Activated CD4-positive, alpha-beta T cell treated with anti-CD3 and anti-CD28 coated beads for 36 hours (primary cell): ENCODE measurements at regions of chr6 and their contacts with region 1.

Region 1: DNA sequence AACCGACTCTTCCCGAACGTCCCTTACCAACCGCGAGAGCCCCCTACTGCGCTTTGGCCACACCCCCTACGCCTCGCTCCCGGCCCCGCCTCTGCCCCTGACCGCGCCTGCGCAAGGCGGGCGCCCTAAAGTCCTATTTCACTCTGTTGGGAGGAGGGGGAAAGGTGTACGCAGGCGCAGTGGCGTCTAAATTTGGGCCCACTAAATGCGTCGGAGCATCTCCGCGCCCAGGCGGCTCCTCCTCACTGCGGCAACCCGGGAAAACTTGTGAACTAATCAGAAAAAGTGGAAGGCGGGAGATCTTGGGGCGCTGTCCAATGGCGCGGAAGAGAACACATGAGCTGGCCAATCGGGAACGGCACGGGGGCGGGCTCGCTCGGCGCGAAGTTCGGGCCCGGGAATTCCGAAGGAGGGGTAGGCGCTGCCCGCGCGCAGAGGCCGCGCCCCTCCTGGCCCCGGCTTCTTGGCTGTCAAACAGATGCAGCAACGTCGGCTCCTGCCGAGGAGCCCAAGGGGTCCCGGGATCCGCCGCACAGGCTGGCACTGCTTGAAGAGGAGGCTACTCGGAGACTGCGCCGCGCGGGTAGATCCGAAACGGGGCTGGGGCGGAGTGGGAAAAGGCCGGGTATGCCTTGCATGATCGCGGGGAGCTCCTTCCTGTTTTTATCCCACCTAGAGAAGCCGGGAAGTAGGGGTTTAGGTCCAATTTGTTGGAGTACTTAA is at the start of gene TCF19:
- DNase-seq: peak; percentile 99
- ATAC-seq: peak; percentile 90
- H3K4me3 Mint-ChIP-seq: peak within 1 kb of the TSS; percentile 97
- H3K27ac Mint-ChIP-seq: peak within 1 kb of the TSS; percentile 89
- H3K4me1 Mint-ChIP-seq: peaks cover 39% of the 10 kb centered on the region
- H3K27me3 Mint-ChIP-seq: no peaks in the 10 kb centered on the region
- total RNA-seq, gene TCF19: 82.6 to 88.0 TPM

Region 2: DNA sequence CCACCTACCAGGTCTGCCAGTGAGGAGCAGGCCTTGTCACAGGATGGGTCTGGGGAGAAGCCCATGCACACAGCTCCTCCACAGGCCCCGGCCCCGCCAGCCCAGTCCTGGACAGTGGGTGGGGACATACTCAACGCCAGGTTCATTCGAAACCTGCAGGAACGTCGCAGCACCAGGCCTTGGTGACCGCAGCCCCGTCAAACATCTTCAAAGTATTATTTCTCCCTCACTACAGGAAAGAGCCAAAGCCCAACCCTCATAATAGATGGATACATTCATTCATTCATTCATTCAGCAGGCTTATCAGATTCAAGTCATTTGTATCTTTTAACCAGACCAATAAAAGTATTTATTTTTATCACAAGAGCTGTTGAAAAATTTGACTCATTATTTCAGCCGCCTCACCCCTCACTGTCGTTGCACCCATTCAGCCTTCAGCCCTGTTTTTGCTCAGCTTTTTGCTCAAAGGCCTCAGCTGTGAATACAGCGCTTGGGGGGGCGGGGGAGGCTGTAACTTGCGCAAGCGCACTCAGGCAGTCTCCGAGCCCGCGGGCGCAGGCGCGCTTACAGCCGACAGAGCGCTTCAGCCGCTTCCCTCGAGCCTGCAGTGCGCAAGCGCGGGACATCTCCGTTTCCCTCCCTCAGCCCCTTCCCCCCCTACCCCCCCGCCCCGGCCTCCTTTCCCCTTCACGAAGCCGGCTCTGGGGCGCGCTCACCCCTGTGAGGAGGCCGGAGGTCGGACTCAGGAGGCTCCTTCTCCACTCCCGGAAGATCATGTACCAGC is 511.7 kb before region 1 on chr6 and contains the start of gene C6orf136:
- CTCF ChIA-PET with region 1: interaction called, 3 read pairs
- POLR2A ChIA-PET with region 1: no interaction called
- intact Hi-C with region 1: loop called in 1 of 2 experiments (anchors 1 kb)
- DNase-seq: peak; percentile 97
- ATAC-seq: peak; percentile 86
- H3K4me3 Mint-ChIP-seq: peak within 1 kb of the TSS; percentile 78
- H3K27ac Mint-ChIP-seq: peak within 1 kb of the TSS; percentile 88
- H3K4me1 Mint-ChIP-seq: peaks cover 20% of the 10 kb centered on the region
- H3K27me3 Mint-ChIP-seq: no peaks in the 10 kb centered on the region
- total RNA-seq, gene C6orf136: 26.5 to 30.8 TPM

Region 3: GRCh38 chr6:31139599-31139998 is 18.7 kb before region 1 on chr6:
- CTCF ChIA-PET with region 1: interaction called, 3 read pairs
- POLR2A ChIA-PET with region 1: no interaction called
- intact Hi-C with region 1: loop called in 1 of 2 experiments (anchors 1 kb)
- DNase-seq: no peak
- ATAC-seq: no peak
- H3K4me3 Mint-ChIP-seq: no peak overlapping the region
- H3K27ac Mint-ChIP-seq: no peak overlapping the region
- H3K4me1 Mint-ChIP-seq: peaks cover 6% of the 10 kb centered on the region
- H3K27me3 Mint-ChIP-seq: no peaks in the 10 kb centered on the region

Region 4: GRCh38 chr6:31197559-31198305 is 39.4 kb after region 1 on chr6:
- CTCF ChIA-PET with region 1: interaction called, 5 read pairs
- POLR2A ChIA-PET with region 1: interaction called, 4 read pairs
- intact Hi-C with region 1: loop called (anchors 1 to 2 kb)
- DNase-seq: peak; percentile 97
- ATAC-seq: peak; percentile 69
- H3K4me3 Mint-ChIP-seq: peak overlapping the region; percentile 76
- H3K27ac Mint-ChIP-seq: peak overlapping the region; percentile 80
- H3K4me1 Mint-ChIP-seq: peaks cover 50% of the 10 kb centered on the region
- H3K27me3 Mint-ChIP-seq: no peaks in the 10 kb centered on the region

Region 5: GRCh38 chr6:31356946-31357466 is 198.7 kb after region 1 on chr6 and contains the start of gene HLA-B:
- CTCF ChIA-PET with region 1: no interaction called
- POLR2A ChIA-PET with region 1: no interaction called
- intact Hi-C with region 1: loop called in 1 of 2 experiments (anchors 1 kb)
- DNase-seq: peak; percentile 91
- ATAC-seq: peak; percentile 80
- H3K4me3 Mint-ChIP-seq: peak within 1 kb of the TSS; percentile 98
- H3K27ac Mint-ChIP-seq: peak within 1 kb of the TSS; percentile 99
- H3K4me1 Mint-ChIP-seq: peaks cover 56% of the 10 kb centered on the region
- H3K27me3 Mint-ChIP-seq: peaks cover 5% of the 10 kb centered on the region
- total RNA-seq, gene HLA-B: 2,101 to 2,412 TPM

Region 6: GRCh38 chr6:31403283-31403989 is 245.1 kb after region 1 on chr6 and contains the start of gene MICA:
- CTCF ChIA-PET with region 1: interaction called, 4 read pairs
- POLR2A ChIA-PET with region 1: no interaction called
- intact Hi-C with region 1: loop called in 1 of 2 experiments (anchors 1 kb)
- DNase-seq: peak; percentile 83
- ATAC-seq: peak; percentile 68
- H3K4me3 Mint-ChIP-seq: peak within 1 kb of the TSS; percentile 71
- H3K27ac Mint-ChIP-seq: peak within 1 kb of the TSS; percentile 71
- H3K4me1 Mint-ChIP-seq: peaks cover 62% of the 10 kb centered on the region
- H3K27me3 Mint-ChIP-seq: no peaks in the 10 kb centered on the region
- total RNA-seq, gene MICA: 6.3 to 7.1 TPM